ENCODE measurements at regions of chr9 and their contacts with region 1.

Region 1: DNA sequence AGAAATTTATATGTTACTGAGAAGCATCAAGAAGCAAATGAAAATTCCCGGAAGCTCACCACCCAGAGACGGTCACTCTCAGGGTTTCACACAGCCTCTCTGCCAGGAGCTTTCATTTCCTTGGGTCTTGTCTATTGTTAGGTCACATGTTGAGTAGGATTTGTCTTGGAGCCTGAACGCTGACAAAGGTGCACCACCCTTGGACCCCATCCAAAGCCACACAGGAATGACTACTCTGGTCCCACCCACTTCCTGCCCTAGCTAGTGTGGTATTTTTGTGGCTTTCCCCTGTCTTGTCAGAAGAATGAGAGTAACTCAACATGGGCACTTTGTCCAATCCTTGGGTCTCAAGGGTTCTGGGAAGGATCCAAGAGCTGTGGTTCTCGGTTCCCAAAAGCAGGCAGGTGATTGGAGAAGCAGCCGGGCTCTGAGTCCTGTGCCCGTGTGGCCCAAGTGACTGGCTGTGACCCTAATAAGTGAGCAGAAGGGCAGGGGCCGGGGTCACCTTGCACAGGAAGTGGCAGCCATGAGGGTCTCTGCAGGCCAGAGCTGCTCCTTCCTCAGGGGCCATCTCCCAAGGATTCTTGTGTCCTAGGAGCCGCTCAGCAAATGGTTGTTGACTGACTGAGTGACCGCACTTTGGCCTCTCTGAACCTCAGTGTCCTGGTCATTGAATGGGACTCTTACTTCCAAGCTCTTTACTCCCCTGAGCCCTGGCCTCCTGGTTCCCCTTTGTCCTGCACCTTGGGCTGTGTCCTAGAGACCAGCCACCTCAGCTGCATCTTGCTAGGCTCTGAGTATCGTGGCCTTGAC is 6.9 kb downstream of the FGD3 start:
- DNase-seq: no peak
- ATAC-seq: no peak
- H3K4me3 ChIP-seq: no peak overlapping the region
- H3K27ac ChIP-seq: no peak overlapping the region
- H3K4me1 ChIP-seq: no peaks in the 10 kb centered on the region
- H3K27me3 ChIP-seq: peaks cover 4% of the 10 kb centered on the region
- CTCF ChIP-seq: no peak
- POLR2A ChIP-seq: no peak
- RAD21 ChIP-seq: no peak

Region 2: DNA sequence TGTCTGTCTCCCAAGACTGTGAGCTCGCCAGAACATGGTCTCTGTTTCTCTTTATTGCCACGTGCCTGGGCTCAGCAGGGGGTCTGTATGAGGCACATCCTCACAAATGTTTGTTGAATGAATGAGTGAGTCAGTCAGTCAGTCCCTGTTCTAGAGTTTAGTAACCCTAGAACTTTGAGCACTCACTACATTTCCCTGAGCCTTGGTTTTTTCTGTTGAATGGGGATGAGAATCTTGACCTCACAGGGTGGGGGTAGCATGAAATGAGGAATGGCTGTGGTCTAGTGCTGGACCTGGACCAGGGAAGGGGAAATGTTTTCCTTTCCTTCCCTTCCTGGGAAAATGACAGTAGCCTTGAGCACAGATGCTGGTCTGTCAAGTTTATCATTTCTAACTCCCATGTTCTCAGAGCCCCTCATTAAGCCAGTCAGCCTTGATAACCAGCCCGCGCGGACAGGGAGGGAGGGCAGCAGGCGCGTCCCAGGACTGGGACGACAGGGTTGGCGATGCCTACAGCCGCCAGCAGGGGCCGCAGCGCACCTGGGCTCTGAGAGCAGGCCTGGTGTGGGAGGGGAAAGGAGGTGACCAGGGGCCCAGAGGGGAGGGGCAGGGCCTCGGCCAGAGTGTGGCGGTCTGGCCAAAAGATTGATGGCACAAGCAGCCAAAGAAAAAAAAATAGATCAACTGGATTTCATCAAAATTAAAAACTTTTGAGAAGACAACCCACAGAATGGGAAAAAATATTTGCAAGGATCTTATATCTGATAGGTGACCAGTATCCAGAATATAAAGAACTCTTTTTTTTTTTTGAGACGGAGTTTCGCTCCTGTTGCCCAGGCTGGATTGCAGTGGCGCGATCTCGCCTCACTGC is 205.6 kb after region 1 on chr9:
- CTCF ChIA-PET with region 1: no interaction called
- POLR2A ChIA-PET with region 1: no interaction called
- dilution Hi-C with region 1: no loop called
- in situ Hi-C with region 1: no loop called
- intact Hi-C with region 1: loop called (anchors 10 kb)
- DNase-seq: peak; percentile 77
- ATAC-seq: peak; percentile 99
- H3K4me3 ChIP-seq: no peak overlapping the region
- H3K27ac ChIP-seq: no peak overlapping the region; the same call in 1 of the 2 replicates
- H3K4me1 ChIP-seq: peaks cover 3% of the 10 kb centered on the region; the same call in 1 of the 2 replicates
- H3K27me3 ChIP-seq: peaks cover 4% of the 10 kb centered on the region
- CTCF ChIP-seq: peak; percentile 97
- POLR2A ChIP-seq: no peak
- RAD21 ChIP-seq: peak; percentile 94